Activated CD4-positive, alpha-beta memory T cell treated with anti-CD3 and anti-CD28 coated beads for 36 hours (primary cell): ENCODE measurements at regions of chr4 and their contacts with region 1.

Region 1: DNA sequence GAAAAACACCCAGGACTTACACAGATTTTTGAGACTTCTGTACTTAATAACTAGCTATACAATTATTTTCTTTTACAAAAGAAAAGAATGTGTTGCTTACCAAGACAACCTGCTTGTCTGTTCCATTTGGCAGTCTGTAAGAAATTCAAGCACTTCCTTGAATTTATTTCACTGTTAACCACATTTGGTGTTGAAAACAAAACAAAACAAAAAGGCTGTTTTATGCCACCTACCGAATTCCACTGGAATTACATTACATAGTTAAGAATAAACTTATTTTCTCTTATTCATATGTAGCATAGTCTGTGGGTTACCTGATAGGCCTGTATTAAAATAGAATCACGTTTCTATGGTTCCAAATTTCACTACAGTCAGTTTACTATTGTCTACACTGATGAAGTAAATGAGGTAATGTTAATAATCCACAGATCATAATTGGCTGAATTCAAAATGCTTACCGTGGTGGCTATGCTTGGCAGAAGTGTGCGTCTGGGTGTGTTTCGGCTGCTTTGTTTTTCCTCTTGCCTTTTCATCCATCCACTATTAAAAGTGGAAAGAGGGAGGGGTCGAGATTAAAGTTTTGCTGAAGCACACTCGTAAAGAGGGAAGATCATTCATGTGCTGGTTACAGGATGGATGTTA is at the start of gene TLR1:
- DNase-seq: peak; percentile 24
- H3K4me3 Mint-ChIP-seq: peak within 1 kb of the TSS; percentile 76
- H3K27ac Mint-ChIP-seq: peak within 1 kb of the TSS; percentile 91
- H3K4me1 Mint-ChIP-seq: peaks cover 35% of the 10 kb centered on the region
- H3K27me3 Mint-ChIP-seq: no peaks in the 10 kb centered on the region
- total RNA-seq, gene TLR1: 1.5 to 1.8 TPM

Region 2: DNA sequence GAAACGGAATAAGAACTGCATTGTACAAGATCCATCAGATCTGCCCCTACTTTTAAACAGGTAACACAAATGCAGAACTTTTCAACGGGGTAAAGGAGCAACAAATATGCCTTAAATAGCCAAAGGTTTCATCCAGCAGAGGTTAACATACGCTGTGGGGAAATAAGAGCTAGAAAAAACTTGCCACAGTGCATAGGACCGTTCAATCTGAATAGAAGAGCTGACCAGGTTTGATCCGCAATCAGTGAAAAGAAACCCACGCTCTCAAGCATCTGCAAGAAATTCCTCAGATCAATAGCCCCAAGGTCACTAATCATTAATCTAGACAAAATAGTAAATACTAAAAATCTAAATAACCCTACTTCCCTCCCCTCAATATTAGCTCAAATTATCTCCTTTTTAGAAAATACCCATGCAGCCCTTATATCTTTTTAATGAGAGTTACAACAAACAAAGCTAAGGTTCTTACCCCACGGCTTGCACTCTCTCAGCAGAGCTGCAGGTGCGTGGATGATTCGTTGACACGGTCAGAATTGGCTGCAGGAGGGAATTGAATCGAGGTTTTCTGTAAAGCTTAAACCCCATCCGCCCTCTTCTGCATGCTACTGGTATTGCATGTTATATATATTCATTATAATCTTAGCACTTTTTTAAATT is 22.2 kb before region 1 on chr4 and contains the start of gene TLR10:
- CTCF ChIA-PET with region 1: interaction called, 18 read pairs
- POLR2A ChIA-PET with region 1: no interaction called
- intact Hi-C with region 1: loop called (anchors 2 kb)
- DNase-seq: peak; percentile 35
- H3K4me3 Mint-ChIP-seq: peak within 1 kb of the TSS; percentile 23
- H3K27ac Mint-ChIP-seq: no peak within 1 kb of the TSS
- H3K4me1 Mint-ChIP-seq: peaks cover 4% of the 10 kb centered on the region
- H3K27me3 Mint-ChIP-seq: peaks cover 2% of the 10 kb centered on the region
- total RNA-seq, gene TLR10: 0.05 TPM in 1 of 2 experiments, not detected in the other

Region 3: GRCh38 chr4:38818441-38818976 is 13.7 kb after region 1 on chr4:
- CTCF ChIA-PET with region 1: interaction called, 3 read pairs
- POLR2A ChIA-PET with region 1: interaction called, 5 read pairs
- intact Hi-C with region 1: loop called (anchors 1 kb)
- DNase-seq: no peak
- H3K4me3 Mint-ChIP-seq: no peak overlapping the region
- H3K27ac Mint-ChIP-seq: no peak overlapping the region
- H3K4me1 Mint-ChIP-seq: peaks cover 22% of the 10 kb centered on the region
- H3K27me3 Mint-ChIP-seq: no peaks in the 10 kb centered on the region

Region 4: DNA sequence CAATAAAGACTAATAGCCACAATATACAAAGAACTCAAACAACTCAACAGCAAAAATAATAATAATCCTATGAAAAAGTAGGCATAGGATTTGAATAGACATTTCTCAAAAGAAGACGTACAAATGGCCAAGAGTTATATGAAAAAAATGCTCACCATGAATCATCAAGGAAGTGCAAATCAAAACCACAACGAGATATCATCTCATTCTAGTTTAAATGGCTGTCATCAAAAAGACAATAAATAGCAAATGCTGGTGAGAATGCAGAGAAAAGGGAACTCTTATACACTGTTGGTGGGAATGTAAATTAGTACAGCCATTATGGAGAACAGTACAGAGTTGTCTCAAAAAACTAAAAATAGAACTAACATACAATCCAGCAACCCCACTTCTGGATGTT is 33.1 kb after region 1 on chr4:
- CTCF ChIA-PET with region 1: interaction called, 6 read pairs
- POLR2A ChIA-PET with region 1: no interaction called
- intact Hi-C with region 1: loop called (anchors 1 kb)
- DNase-seq: no peak
- H3K4me3 Mint-ChIP-seq: peak overlapping the region; percentile 24
- H3K27ac Mint-ChIP-seq: peak overlapping the region; percentile 42
- H3K4me1 Mint-ChIP-seq: peaks cover 19% of the 10 kb centered on the region
- H3K27me3 Mint-ChIP-seq: no peaks in the 10 kb centered on the region

Region 5: GRCh38 chr4:38889143-38889542 is 84.4 kb after region 1 on chr4:
- CTCF ChIA-PET with region 1: interaction called, 8 read pairs
- POLR2A ChIA-PET with region 1: no interaction called
- intact Hi-C with region 1: loop called (anchors 1 kb)
- DNase-seq: no peak
- H3K4me3 Mint-ChIP-seq: peak overlapping the region; percentile 48
- H3K27ac Mint-ChIP-seq: peak overlapping the region; percentile 81
- H3K4me1 Mint-ChIP-seq: peaks cover 22% of the 10 kb centered on the region
- H3K27me3 Mint-ChIP-seq: no peaks in the 10 kb centered on the region